Left colon (tissue), 2 donors: ENCODE measurements at regions of chr1 and their contacts with region 1.

Region 1: GRCh38 chr1:225777583-225778336 is at the start of gene SRP9:
- DNase-seq: peak; percentile 99
- ATAC-seq: peak; percentile 95
- total RNA-seq, gene SRP9: 186 to 202 TPM

Region 2: DNA sequence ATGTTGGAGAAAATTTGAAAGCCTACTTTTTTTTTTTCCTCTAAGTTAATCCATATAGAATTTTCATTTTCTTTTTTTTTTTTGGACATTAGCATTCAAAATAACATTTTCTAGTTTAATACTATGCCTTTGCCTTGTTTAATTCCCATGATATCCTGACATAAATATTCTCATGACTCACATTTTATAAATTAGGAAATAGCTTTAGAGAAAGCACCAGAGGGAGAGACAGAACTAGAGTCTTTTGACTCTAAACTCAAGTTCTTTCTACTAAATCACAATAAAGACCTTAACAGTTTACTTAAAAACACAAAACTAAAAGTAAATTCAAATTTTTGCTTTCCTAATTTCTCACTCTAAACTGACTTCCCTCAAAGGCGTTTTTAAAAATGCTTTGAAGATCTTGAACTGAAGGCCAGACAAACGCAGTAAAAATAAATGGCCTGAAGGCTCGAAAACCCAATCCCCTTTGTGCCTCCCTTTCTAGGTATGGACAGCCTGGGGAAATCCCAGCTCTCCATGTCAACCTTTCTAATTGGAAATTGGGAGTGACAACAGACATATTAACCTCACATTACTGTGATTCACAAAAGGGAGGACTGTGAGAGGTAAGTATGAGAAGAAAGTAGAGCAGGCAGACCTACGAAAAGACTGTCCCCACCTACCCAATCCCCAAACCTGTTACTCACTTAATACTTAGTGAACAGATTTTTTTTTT is 229.5 kb before region 1 on chr1:
- intact Hi-C with region 1: loop called in 1 of 2 experiments (anchors 10 kb)
- DNase-seq: no peak
- ATAC-seq: no peak

Region 3: DNA sequence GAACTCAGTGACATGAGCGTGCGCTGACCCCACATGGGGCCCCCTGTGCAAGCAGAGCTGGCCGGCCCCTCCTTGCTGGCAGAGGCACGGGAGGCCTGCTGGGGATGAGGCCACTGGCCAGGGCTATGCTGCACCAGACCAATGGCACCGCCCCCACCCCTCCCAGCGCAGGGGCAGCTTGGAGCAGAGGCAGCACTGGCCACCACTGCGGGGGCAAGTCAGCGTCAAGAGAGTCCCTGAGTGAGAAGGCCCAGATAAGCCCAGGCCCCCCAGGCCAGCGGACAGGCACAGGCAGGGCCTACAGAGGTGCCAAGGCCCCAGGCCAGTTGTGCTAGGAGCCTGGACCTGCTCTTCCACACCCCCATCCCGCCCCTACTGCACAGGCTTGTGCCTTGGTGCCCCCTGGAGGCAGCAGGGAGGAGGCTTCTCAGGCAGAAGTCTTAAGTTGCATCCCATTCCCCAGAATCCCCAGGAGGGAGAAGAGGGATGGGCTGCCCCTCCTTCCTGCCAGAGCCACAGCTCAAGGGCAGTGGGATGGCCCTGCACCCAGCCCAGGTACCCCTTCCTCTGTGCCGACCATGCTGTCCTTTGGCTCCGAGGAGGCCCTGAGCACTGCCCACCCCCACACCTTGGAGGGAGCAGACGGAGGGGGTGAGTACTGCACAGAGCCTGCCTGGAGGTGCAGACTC is 68.0 kb after region 1 on chr1:
- intact Hi-C with region 1: loop called in 1 of 2 experiments (anchors 10 kb)
- DNase-seq: peak; percentile 72
- ATAC-seq: peak; percentile 38